HAP-1 (cell line): ENCODE measurements at regions of chr1 and their contacts with region 1.

Region 1: GRCh38 chr1:10867138-10867721 is 70.8 kb upstream of the CASZ1 start:
- DNase-seq: peak; percentile 34 to 88
- H3K4me3 ChIP-seq: peak overlapping the region; percentile 22
- H3K4me1 ChIP-seq: peaks cover 7% of the 10 kb centered on the region
- H3K27me3 ChIP-seq: peaks cover 6% of the 10 kb centered on the region; the same call in 1 of the 2 replicates

Region 2: DNA sequence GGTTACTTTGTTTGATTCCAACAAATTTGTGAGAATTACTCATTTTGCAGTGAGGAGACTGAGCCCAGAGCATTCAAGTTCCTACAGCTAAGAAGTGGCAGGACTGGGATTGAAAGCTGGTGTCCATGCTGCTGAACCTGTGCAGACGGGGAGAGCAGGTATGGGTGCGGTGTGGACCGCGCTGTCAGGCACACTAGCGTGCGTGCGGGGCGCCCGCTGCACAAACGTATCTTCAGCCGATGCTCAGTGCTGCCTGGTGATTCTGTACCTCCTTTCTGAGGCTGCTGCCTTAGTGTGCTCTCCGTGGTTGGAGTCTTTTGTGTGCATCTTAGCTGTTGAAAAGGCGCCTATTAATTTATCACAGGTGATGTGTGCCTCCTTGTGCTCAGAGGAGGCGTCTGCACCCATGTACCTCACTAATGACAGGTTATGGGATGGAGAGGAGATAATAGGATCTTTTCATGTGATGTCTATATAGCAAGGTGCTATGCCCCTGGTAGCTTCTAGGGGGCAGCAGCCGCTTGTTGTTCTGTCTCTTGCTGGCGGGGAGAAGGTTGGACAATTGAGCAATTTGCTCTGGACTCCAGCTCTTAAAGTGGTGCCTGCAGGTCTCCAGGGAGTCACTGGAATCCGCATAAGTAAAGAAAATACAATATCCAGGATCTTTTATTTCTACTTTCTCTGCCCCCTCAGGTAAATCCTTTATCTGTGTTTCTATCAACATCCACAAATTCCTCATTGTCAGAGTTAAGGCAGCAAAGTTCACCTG is 359.9 kb before region 1 on chr1:
- in situ Hi-C with region 1: loop called (anchors 10 kb)
- DNase-seq: peak; percentile 83 to 91
- H3K4me3 ChIP-seq: no peak overlapping the region
- H3K4me1 ChIP-seq: peaks cover 14% of the 10 kb centered on the region
- H3K27me3 ChIP-seq: no peaks in the 10 kb centered on the region